ENCODE measurements at regions of chr3 and their contacts with region 1.

Region 1: GRCh38 chr3:50611464-50612233 is at the start of gene CISH:
- DNase-seq: peak; percentile 96
- ATAC-seq: peak; percentile 73
- H3K4me3 ChIP-seq: peak within 1 kb of the TSS; percentile 71
- H3K27ac ChIP-seq: no peak within 1 kb of the TSS
- H3K4me1 ChIP-seq: peaks cover 23% of the 10 kb centered on the region
- H3K27me3 ChIP-seq: no peaks in the 10 kb centered on the region
- CTCF ChIP-seq: peak; percentile 44
- total RNA-seq, gene CISH: 1.6 and 2.3 TPM in 2 replicates

Region 2: GRCh38 chr3:50350527-50351322 is 260.9 kb before region 1 on chr3 and contains the starts of genes CYB561D2 and NPRL2:
- CTCF ChIA-PET with region 1: interaction called, 4 read pairs
- POLR2A ChIA-PET with region 1: no interaction called
- intact Hi-C with region 1: loop called (anchors 5 kb)
- DNase-seq: peak; percentile 97
- ATAC-seq: peak; percentile 88
- H3K4me3 ChIP-seq: peak within 1 kb of the TSS; percentile 84
- H3K27ac ChIP-seq: peak within 1 kb of the TSS; percentile 70
- H3K4me1 ChIP-seq: peaks cover 43% of the 10 kb centered on the region
- H3K27me3 ChIP-seq: no peaks in the 10 kb centered on the region
- CTCF ChIP-seq: no peak
- total RNA-seq, gene CYB561D2: 37.1 and 44.3 TPM in 2 replicates
- total RNA-seq, gene NPRL2: 40.9 and 56.9 TPM in 2 replicates

Region 3: DNA sequence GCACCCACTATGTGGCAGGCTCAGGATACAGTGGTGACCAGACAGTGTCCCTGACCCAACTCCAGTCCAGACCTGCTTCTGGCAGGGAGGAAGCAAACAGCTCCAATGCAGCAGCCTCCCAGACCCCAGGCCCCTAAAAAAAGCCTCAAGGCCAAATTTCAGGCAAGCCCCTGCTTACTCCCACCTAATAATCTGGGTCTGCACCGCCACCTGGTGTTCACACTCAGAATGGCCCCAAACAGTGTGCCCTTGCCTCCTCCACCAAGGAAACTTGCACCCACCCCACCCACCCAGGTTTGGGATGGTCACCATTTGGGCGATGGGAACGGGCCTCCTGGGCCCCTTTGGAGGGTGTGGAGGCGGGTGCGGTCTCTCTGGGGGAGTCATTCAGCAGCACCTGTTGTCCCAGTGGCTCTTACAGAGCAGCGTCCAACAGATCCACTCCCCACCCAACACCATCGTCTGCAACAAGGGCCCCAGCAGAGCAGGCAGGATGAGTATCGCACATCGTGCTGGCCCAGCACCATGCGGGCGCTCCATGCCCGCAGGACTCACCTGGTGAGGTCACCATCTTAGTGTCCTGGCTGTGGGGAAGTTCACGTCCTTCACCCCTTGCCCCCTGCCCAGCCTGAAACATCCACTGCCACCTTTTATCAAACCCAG is 61.4 kb before region 1 on chr3:
- CTCF ChIA-PET with region 1: no interaction called
- POLR2A ChIA-PET with region 1: no interaction called
- intact Hi-C with region 1: loop called (anchors 1 kb)
- DNase-seq: peak; percentile 71
- ATAC-seq: peak; percentile 64
- H3K4me3 ChIP-seq: no peak overlapping the region
- H3K27ac ChIP-seq: no peak overlapping the region
- H3K4me1 ChIP-seq: no peaks in the 10 kb centered on the region
- H3K27me3 ChIP-seq: no peaks in the 10 kb centered on the region
- CTCF ChIP-seq: peak; percentile 63

Region 4: GRCh38 chr3:50652709-50653108 is 41.1 kb after region 1 on chr3:
- CTCF ChIA-PET with region 1: interaction called, 40 read pairs
- POLR2A ChIA-PET with region 1: no interaction called
- intact Hi-C with region 1: loop called (anchors 1 kb)
- DNase-seq: peak; percentile 76
- ATAC-seq: peak; percentile 80
- H3K4me3 ChIP-seq: no peak overlapping the region
- H3K27ac ChIP-seq: no peak overlapping the region
- H3K4me1 ChIP-seq: no peaks in the 10 kb centered on the region
- H3K27me3 ChIP-seq: no peaks in the 10 kb centered on the region
- CTCF ChIP-seq: peak; percentile 81

Region 5: DNA sequence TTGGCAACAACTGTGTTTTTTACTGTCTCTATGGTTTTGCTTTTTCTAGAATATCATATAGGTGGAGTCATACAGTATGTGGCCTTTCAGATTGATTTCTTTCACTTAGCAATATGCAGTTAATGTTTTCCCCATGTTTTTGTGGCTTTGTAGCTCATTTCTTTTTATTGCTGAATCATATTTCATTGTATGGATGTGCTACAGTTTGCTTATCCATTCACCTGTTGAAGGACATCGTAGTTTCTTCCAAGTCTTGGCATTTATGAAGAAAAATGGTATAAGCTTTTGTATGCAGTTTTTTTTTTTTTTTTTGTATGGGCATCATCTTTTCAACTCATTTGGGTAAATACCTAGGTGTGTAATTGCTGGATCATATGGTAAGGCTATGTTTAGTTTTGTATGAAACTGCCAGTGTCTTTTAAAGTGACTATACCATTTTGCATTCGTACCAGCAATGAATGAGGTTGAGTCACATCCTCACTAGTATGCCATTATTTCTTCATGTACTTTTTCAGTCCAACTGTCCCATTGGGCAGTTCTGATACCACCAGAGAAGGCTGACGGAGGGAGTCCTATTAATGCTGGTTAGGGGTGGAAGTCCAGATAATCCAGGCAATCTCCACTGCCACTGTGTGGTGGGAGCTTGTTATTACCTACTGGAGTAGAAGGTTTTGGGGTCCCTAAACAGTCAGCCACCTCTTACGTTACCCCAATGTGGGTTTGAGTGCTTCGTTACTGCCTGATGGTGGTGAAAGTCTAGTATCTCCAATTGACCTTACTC is 273.6 kb after region 1 on chr3:
- CTCF ChIA-PET with region 1: no interaction called
- POLR2A ChIA-PET with region 1: no interaction called
- intact Hi-C with region 1: loop called (anchors 1 kb)
- DNase-seq: peak; percentile 39
- ATAC-seq: no peak
- H3K4me3 ChIP-seq: no peak overlapping the region
- H3K27ac ChIP-seq: no peak overlapping the region
- H3K4me1 ChIP-seq: no peaks in the 10 kb centered on the region
- H3K27me3 ChIP-seq: no peaks in the 10 kb centered on the region
- CTCF ChIP-seq: peak; percentile 51

Region 6: GRCh38 chr3:51311055-51311454 is 699.4 kb after region 1 on chr3:
- CTCF ChIA-PET with region 1: interaction called, 11 read pairs
- POLR2A ChIA-PET with region 1: no interaction called
- intact Hi-C with region 1: loop called (anchors 1 kb)
- DNase-seq: peak; percentile 50
- ATAC-seq: peak; percentile 69
- H3K4me3 ChIP-seq: no peak overlapping the region
- H3K27ac ChIP-seq: no peak overlapping the region
- H3K4me1 ChIP-seq: no peaks in the 10 kb centered on the region
- H3K27me3 ChIP-seq: peaks cover 30% of the 10 kb centered on the region
- CTCF ChIP-seq: peak; percentile 65

Region 7: GRCh38 chr3:51371943-51372557 is 760.4 kb after region 1 on chr3:
- CTCF ChIA-PET with region 1: interaction called, 11 read pairs
- POLR2A ChIA-PET with region 1: no interaction called
- intact Hi-C with region 1: loop called (anchors 1 kb)
- DNase-seq: peak; percentile 95
- ATAC-seq: peak; percentile 90
- H3K4me3 ChIP-seq: no peak overlapping the region
- H3K27ac ChIP-seq: no peak overlapping the region
- H3K4me1 ChIP-seq: no peaks in the 10 kb centered on the region
- H3K27me3 ChIP-seq: peaks cover 9% of the 10 kb centered on the region
- CTCF ChIP-seq: peak; percentile 89